IMR-90 (cell line): ENCODE measurements at regions of chr14 and their contacts with region 1.

Region 1: DNA sequence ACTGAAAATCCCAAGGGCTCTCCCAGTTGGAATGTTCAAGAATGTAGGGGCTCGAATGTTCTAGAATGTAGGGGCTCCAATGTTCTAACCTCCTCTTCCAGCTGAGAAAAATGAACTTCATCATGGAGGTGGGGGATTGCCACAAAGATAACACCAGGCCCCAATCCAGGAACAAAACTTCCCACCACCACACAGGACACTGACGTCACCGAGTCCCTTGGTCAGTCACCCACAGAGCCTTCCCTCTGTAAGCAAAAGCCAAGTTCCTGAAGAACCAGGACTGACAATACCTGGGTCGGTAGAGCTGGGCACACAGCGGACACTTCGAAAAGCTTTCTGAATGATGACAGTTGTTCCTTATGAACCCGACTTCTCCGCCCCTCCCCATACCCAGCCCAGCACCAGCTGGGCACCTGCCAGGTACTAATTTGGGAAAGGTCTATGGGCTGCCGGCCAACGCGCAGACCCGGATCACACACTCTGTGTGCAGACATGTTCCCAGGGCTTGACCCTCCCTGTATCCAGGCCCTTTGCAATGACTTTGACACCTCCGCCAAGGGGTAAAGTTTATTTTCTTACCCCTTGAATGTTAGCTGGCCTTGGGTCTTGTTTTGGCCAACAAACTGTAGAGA is 18.9 kb downstream of the ITPK1 start:
- DNase-seq: no peak
- ATAC-seq: no peak
- H3K4me3 ChIP-seq: no peak overlapping the region
- H3K27ac ChIP-seq: no peak overlapping the region
- H3K4me1 ChIP-seq: peaks cover 2% of the 10 kb centered on the region; the same call in 1 of the 2 replicates
- H3K27me3 ChIP-seq: no peaks in the 10 kb centered on the region; the same call in 1 of the 2 replicates
- CTCF ChIP-seq: no peak
- POLR2A ChIP-seq: no peak
- RAD21 ChIP-seq: no peak

Region 2: GRCh38 chr14:93132470-93133065 is 35.8 kb after region 1 on chr14:
- CTCF ChIA-PET with region 1: no interaction called
- POLR2A ChIA-PET with region 1: no interaction called
- dilution Hi-C with region 1: no loop called
- in situ Hi-C with region 1: no loop called
- intact Hi-C with region 1: loop called (anchors 1 kb)
- DNase-seq: peak; percentile 22
- ATAC-seq: peak; percentile 56; the same call in 1 of the 2 replicates
- H3K4me3 ChIP-seq: no peak overlapping the region
- H3K27ac ChIP-seq: no peak overlapping the region
- H3K4me1 ChIP-seq: no peaks in the 10 kb centered on the region
- H3K27me3 ChIP-seq: peaks cover 12% of the 10 kb centered on the region
- CTCF ChIP-seq: peak; percentile 38
- POLR2A ChIP-seq: no peak
- RAD21 ChIP-seq: peak; percentile 36; the same call in 1 of the 2 replicates